ENCODE measurements at regions of chr3 and their contacts with region 1.

Region 1: GRCh38 chr3:65230256-65231139 is 542.7 kb upstream of the ADAMTS9 start:
- DNase-seq: no peak
- H3K4me3 ChIP-seq: no peak overlapping the region
- H3K27ac ChIP-seq: no peak overlapping the region
- H3K4me1 ChIP-seq: no peaks in the 10 kb centered on the region
- H3K27me3 ChIP-seq: no peaks in the 10 kb centered on the region
- CTCF ChIP-seq: no peak

Region 2: GRCh38 chr3:64961301-64961700 is 269.2 kb before region 1 on chr3:
- intact Hi-C with region 1: loop called (anchors 5 kb)
- DNase-seq: no peak
- H3K4me3 ChIP-seq: no peak overlapping the region
- H3K27ac ChIP-seq: no peak overlapping the region
- H3K4me1 ChIP-seq: peaks cover 9% of the 10 kb centered on the region
- H3K27me3 ChIP-seq: no peaks in the 10 kb centered on the region
- CTCF ChIP-seq: no peak

Measured in left ventricle myocardium inferior (tissue), 1 donor.